ENCODE measurements at regions of chr19 and their contacts with region 1.

Region 1: GRCh38 chr19:10717356-10718204 is at the start of gene DNM2:
- DNase-seq: peak; percentile 98 to 100 (median 99)

Region 2: DNA sequence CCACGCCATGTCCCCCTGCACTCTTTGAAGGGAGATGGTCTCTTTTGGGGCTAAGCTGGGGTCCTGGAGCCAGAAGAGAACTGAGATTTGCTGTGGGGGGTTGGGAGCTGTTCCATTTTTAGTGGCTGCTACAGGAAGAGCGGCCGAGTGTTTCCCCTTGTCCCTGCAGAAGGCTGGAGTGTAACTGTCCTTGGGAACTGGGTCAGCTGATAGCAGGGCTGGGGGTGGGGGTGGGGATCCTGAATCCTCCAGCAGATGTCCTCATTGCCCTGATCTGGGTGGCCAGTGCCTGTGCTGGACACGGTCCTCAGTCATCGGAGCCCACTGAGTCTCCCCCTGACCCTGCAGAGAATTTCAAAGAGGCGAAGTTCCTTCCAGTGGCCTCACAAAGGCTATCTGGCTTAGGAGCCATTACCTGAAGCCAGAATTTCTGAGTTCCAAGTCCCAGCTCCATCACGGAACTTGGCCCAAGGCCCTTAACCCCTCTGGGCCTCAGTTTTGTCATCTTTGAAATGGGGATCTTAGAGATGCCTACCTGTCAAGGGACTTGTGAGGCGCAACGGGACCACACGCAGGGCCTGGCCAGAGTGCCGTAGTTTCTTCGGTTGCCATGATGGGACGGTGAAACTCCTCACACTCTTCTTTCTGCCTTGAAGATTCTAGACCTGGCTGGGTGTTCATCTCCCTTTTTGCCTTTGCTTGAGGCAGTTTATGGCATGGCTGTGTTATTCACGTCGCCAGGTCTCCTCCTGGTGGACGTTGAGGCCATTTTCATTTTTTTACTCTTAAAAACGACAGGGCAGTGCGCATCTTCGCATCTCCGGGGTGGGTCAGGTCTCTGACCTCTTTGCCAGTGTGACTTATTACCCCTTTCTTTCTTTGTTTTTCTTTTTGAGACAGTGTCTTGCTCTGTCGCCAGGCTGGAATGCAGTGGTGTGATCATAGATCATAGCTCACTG is 52.2 kb after region 1 on chr19:
- intact Hi-C with region 1: loop called (anchors 2 kb)
- DNase-seq: peak in 39 of 42 donors; percentile 36 to 89 (median 66)

Region 3: GRCh38 chr19:10835754-10836477 is 118.3 kb after region 1 on chr19 and contains the start of gene TMED1:
- intact Hi-C with region 1: loop called (anchors 10 kb)
- DNase-seq: peak; percentile 94 to 100 (median 99)

Region 4: GRCh38 chr19:10864538-10864899 is 146.9 kb after region 1 on chr19:
- intact Hi-C with region 1: loop called (anchors 10 kb)
- DNase-seq: peak; percentile 73 to 95 (median 89)

Measured in head of caudate nucleus (tissue), 42 donors.